ENCODE measurements at regions of chr1 and their contacts with region 1.

Region 1: GRCh38 chr1:167964646-167965045 is 27.8 kb upstream of the MPC2 start:
- DNase-seq: no peak
- ATAC-seq: no peak
- H3K4me3 ChIP-seq: no peak overlapping the region
- H3K27ac ChIP-seq: no peak overlapping the region
- H3K4me1 ChIP-seq: no peaks in the 10 kb centered on the region
- H3K27me3 ChIP-seq: no peaks in the 10 kb centered on the region
- CTCF ChIP-seq: no peak
- POLR2A ChIP-seq: no peak
- RAD21 ChIP-seq: no peak

Region 2: DNA sequence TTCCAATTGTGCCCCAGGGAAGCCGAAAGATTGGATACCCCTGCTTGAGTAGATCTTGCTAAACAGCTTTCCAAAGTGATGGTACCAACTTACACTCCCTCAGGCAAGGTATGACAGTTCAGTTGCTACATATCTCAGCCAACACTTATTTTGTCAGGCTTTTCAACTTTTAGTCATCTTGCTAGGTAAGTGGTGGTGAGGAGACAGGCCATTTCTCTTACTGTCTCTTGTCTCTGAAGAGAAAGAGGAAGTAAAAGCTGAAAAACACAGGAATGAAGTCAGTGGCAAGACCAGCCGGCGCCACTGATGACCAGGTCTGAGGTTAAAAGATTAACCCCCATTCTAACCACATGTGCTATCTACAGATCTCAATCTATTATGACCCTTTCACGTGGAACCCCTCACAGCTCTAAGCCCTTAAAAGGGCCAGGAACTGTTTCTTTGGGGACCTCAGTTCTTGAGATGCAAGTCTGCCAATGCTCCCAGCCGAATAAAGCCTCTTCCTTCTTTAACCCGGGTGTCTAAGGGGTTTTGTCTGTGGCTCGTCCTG is 54.9 kb before region 1 on chr1:
- CTCF ChIA-PET with region 1: no interaction called
- POLR2A ChIA-PET with region 1: no interaction called
- dilution Hi-C with region 1: no loop called
- in situ Hi-C with region 1: no loop called
- intact Hi-C with region 1: loop called (anchors 2 kb)
- DNase-seq: no peak
- ATAC-seq: no peak
- H3K4me3 ChIP-seq: no peak overlapping the region
- H3K27ac ChIP-seq: no peak overlapping the region
- H3K4me1 ChIP-seq: peaks cover 4% of the 10 kb centered on the region
- H3K27me3 ChIP-seq: no peaks in the 10 kb centered on the region
- CTCF ChIP-seq: no peak
- POLR2A ChIP-seq: no peak
- RAD21 ChIP-seq: no peak

Region 3: DNA sequence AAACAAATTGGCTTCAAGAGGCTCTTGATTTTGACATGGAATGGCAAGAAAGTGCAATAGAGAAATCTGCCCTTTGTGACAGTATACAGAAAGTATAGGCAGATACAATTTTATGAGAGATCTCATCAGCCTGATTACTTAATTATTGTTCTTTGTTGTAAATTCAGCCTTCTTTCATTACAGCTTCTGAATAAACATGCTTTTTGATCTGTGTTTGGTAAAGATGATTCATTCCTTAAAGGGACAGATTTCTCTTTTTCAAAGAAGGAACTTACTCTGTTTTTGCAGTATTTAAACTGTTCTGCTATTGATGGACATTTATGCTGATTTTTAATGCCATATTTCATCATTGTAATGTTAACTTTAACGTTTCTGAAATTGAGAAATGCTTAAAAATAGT is 14.1 kb before region 1 on chr1:
- CTCF ChIA-PET with region 1: no interaction called
- POLR2A ChIA-PET with region 1: no interaction called
- dilution Hi-C with region 1: no loop called
- in situ Hi-C with region 1: no loop called
- intact Hi-C with region 1: loop called (anchors 2 kb)
- DNase-seq: no peak
- ATAC-seq: no peak
- H3K4me3 ChIP-seq: no peak overlapping the region
- H3K27ac ChIP-seq: no peak overlapping the region
- H3K4me1 ChIP-seq: peaks cover 6% of the 10 kb centered on the region
- H3K27me3 ChIP-seq: no peaks in the 10 kb centered on the region
- CTCF ChIP-seq: no peak
- POLR2A ChIP-seq: no peak
- RAD21 ChIP-seq: no peak

Region 4: DNA sequence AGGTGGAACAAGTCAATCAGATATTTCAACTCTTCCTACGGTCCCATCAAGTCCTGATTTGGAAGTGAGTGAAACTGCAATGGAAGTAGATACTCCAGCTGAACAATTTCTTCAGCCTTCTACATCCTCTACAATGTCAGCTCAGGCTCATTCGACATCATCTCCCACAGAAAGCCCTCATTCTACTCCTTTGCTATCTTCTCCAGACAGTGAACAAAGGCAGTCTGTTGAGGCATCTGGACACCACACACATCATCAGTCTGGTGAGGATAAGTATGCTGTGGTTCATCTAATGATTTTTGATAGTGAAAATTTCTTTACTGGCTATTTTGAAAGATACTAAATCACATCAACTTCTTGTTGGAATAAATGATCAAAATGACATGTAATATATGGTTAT is 39.9 kb after region 1 on chr1:
- CTCF ChIA-PET with region 1: no interaction called
- POLR2A ChIA-PET with region 1: no interaction called
- dilution Hi-C with region 1: no loop called
- in situ Hi-C with region 1: no loop called
- intact Hi-C with region 1: no loop called
- DNase-seq: no peak
- ATAC-seq: no peak
- H3K4me3 ChIP-seq: no peak overlapping the region
- H3K27ac ChIP-seq: no peak overlapping the region
- H3K4me1 ChIP-seq: no peaks in the 10 kb centered on the region
- H3K27me3 ChIP-seq: no peaks in the 10 kb centered on the region
- CTCF ChIP-seq: no peak
- POLR2A ChIP-seq: no peak
- RAD21 ChIP-seq: no peak

Region 5: GRCh38 chr1:168121401-168122011 is 156.9 kb after region 1 on chr1:
- CTCF ChIA-PET with region 1: no interaction called
- POLR2A ChIA-PET with region 1: no interaction called
- dilution Hi-C with region 1: no loop called
- in situ Hi-C with region 1: no loop called
- intact Hi-C with region 1: no loop called
- DNase-seq: peak; percentile 88
- ATAC-seq: peak; percentile 90
- H3K4me3 ChIP-seq: no peak overlapping the region
- H3K27ac ChIP-seq: peak overlapping the region; percentile 6; the same call in 1 of the 2 replicates
- H3K4me1 ChIP-seq: peaks cover 8% of the 10 kb centered on the region
- H3K27me3 ChIP-seq: no peaks in the 10 kb centered on the region
- CTCF ChIP-seq: no peak
- POLR2A ChIP-seq: no peak
- RAD21 ChIP-seq: no peak

Measured in IMR-90 (cell line).